ENCODE measurements at regions of chr14 and their contacts with region 1.

Region 1: GRCh38 chr14:103984196-103984595 is 41.9 kb upstream of the RD3L start:
- DNase-seq: no peak
- H3K4me3 ChIP-seq: no peak overlapping the region
- H3K27ac ChIP-seq: no peak overlapping the region
- H3K4me1 ChIP-seq: no peaks in the 10 kb centered on the region
- H3K27me3 ChIP-seq: peaks cover 0 to 3% of the 10 kb centered on the region in 2 experiments
- CTCF ChIP-seq: no peak
- POLR2A ChIP-seq: no peak

Region 2: GRCh38 chr14:103385152-103385993 is 598.8 kb before region 1 on chr14 and contains the start of gene MARK3:
- CTCF ChIA-PET with region 1: no interaction called
- POLR2A ChIA-PET with region 1: no interaction called
- dilution Hi-C with region 1: no loop called
- intact Hi-C with region 1: no loop called
- DNase-seq: peak; percentile 97
- H3K4me3 ChIP-seq: peak within 1 kb of the TSS; percentile 57 to 95 (median 82)
- H3K27ac ChIP-seq: peak within 1 kb of the TSS; percentile 74
- H3K4me1 ChIP-seq: peaks cover 26% of the 10 kb centered on the region
- H3K27me3 ChIP-seq: peaks cover 0 to 3% of the 10 kb centered on the region in 2 experiments
- CTCF ChIP-seq: peak; percentile 13 to 18
- POLR2A ChIP-seq: peak; percentile 88
- total RNA-seq, gene MARK3: 81.2 and 96.1 TPM in 2 replicates

Region 3: GRCh38 chr14:103524002-103524935 is 459.9 kb before region 1 on chr14:
- CTCF ChIA-PET with region 1: no interaction called
- POLR2A ChIA-PET with region 1: no interaction called
- dilution Hi-C with region 1: no loop called
- intact Hi-C with region 1: no loop called
- DNase-seq: no peak
- H3K4me3 ChIP-seq: no peak overlapping the region
- H3K27ac ChIP-seq: no peak overlapping the region
- H3K4me1 ChIP-seq: peaks cover 8% of the 10 kb centered on the region
- H3K27me3 ChIP-seq: peaks cover 19 to 34% of the 10 kb centered on the region in 2 experiments
- CTCF ChIP-seq: no peak
- POLR2A ChIP-seq: no peak

Region 4: DNA sequence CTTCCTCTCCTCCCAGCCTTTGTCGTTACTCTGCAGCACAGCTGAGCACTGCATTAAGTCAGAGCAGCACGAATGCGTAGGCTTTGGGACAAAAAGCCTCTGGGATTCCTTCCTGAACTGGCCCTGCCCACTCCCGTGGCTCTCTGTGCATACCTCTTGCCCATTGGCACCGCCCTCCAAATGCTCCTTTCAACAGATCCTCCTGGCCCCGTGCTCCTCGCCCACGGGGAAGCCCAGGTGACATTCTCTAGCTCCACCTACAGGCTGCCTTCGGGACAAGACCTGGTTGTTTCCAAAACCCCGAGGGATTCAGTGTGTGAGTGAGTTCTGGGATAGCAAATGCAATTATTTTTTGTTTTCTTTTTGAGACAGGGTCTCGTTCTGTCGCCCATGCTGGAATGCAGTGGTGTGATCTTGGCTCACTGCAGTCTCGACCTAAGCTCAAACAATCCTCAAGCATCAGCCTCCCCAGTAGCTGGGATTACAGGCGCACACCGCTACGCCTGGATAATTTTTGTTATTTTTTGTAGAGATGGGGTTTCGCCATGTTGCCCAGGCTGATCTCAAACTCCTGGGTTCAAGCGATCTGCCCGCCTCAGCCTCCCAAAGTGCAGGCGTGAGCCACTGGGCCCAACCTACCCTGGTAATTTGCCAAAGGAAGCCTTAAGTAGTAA is 73.8 kb before region 1 on chr14:
- CTCF ChIA-PET with region 1: interaction called, 23 read pairs
- POLR2A ChIA-PET with region 1: no interaction called
- dilution Hi-C with region 1: no loop called
- intact Hi-C with region 1: loop called (anchors 2 kb)
- DNase-seq: peak; percentile 75
- H3K4me3 ChIP-seq: no peak overlapping the region
- H3K27ac ChIP-seq: no peak overlapping the region
- H3K4me1 ChIP-seq: peaks cover 4% of the 10 kb centered on the region
- H3K27me3 ChIP-seq: no peaks in the 10 kb centered on the region
- CTCF ChIP-seq: peak; percentile 85
- POLR2A ChIP-seq: no peak

Region 5: DNA sequence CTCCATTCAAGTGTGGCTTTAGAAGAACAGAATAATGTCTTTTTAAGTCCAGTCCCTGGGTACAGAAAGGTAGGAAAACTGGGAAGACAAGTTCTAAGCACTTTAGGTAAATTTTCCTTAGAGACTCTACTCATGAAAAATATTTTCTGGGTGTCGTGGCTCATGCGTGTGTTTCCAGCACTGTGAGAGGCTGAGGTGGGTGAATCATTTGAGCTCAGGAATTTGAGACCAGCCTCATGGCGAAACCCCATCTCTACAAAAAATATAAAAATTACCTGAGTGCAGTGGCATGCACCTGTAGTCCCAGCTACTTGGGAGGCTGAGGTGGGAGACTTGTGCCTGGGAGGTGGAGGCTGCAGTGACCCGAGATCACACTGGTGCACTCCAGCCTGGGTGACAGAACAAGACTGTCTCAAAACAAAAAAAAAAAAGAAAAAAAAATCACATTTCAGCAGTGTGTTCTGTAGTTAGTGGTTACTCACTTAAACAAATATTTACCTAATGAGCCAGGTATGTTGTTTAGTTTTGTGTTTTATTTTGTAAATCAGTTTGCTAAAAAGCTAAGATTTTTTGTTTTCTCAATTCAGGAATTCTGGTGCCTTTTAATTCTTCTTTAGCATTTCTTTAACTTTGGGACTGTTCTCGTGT is 10.5 kb after region 1 on chr14:
- CTCF ChIA-PET with region 1: interaction called, 10 read pairs
- POLR2A ChIA-PET with region 1: no interaction called
- dilution Hi-C with region 1: no loop called
- intact Hi-C with region 1: no loop called
- DNase-seq: no peak
- H3K4me3 ChIP-seq: no peak overlapping the region
- H3K27ac ChIP-seq: no peak overlapping the region
- H3K4me1 ChIP-seq: no peaks in the 10 kb centered on the region
- H3K27me3 ChIP-seq: peaks cover 8 to 10% of the 10 kb centered on the region in 2 experiments
- CTCF ChIP-seq: no peak
- POLR2A ChIP-seq: no peak